Mammary epithelial cell (primary cell): ENCODE measurements at regions of chr1 and their contacts with region 1.

Region 1: GRCh38 chr1:230978491-230979388 is at the starts of genes ARV1 and TTC13:
- DNase-seq: peak; percentile 99
- H3K4me3 ChIP-seq: peak within 1 kb of the TSS; percentile 70 to 84 (median 84)
- H3K27ac ChIP-seq: peak within 1 kb of the TSS; percentile 39
- H3K4me1 ChIP-seq: peaks cover 6% of the 10 kb centered on the region
- H3K27me3 ChIP-seq: no peaks in the 10 kb centered on the region
- CTCF ChIP-seq: peak; percentile 26 to 47
- total RNA-seq, gene ARV1: 14.5 to 22.4 TPM
- total RNA-seq, gene TTC13: 11.9 to 12.5 TPM

Region 2: DNA sequence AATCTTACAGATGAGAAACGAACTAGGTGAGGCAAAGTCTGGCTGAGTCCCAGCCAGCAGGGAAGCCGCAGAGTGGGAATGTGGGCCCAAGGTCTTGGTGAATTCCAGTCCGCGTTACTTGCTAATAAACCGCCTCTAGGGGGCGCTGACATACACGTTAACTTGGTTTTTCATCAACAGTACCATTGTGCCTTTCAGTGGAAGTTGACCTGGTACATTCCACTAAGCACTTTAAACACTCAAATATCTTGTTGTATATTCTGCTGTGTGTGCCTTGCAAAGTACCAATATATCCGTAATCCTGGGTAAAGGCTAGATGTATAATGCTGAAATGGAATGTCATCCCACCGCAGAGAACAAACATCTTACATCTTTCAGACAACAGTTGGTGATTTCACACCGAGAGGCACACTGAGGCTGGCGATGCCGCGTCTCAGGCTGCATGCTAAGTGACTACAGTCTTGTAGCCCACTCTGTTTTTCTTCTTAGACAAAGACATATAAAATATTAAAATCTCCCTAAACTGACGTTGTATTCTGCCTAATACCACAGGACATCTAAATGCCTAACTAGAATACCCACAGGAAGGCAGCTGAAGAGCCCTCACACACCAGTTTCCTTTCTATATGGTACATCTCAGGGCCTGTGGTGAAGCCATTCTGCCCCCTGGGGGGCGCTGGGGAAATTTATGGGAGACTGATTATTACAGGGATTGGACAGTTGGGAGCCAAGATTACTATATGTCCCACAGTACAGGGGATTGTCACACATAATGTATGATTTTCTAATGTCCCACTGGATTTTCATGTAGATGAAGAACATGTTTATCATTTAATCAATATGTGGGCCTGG is 61.2 kb before region 1 on chr1:
- CTCF ChIA-PET with region 1: no interaction called
- dilution Hi-C with region 1: no loop called
- in situ Hi-C with region 1: no loop called
- intact Hi-C with region 1: loop called (anchors 2 kb)
- DNase-seq: peak; percentile 44
- H3K4me3 ChIP-seq: no peak overlapping the region
- H3K27ac ChIP-seq: no peak overlapping the region
- H3K4me1 ChIP-seq: no peaks in the 10 kb centered on the region
- H3K27me3 ChIP-seq: no peaks in the 10 kb centered on the region
- CTCF ChIP-seq: peak; percentile 73 to 81

Region 3: DNA sequence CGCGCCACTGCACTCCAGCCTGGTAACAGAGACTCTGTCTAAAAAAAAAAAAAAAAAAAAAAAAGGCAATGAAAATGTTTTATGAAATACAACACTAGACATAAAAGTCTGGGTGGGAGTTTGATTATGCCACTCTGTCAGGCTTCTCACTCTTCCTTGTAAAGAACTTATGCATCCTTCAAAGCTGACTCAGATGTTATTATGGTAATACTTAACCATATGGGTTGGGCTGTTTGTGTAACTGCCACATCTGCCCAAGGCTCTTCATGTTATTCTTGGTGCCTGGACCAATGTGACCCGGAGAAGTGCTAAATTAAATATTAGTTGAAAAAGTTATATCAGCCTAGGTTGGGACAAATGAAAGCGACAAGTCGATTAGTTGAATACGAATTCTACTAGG is 37.5 kb after region 1 on chr1:
- CTCF ChIA-PET with region 1: no interaction called
- dilution Hi-C with region 1: no loop called
- in situ Hi-C with region 1: no loop called
- intact Hi-C with region 1: loop called (anchors 2 kb)
- DNase-seq: peak; percentile 43
- H3K4me3 ChIP-seq: no peak overlapping the region
- H3K27ac ChIP-seq: peak overlapping the region; percentile 95
- H3K4me1 ChIP-seq: peaks cover 31% of the 10 kb centered on the region
- H3K27me3 ChIP-seq: no peaks in the 10 kb centered on the region
- CTCF ChIP-seq: no peak

Region 4: DNA sequence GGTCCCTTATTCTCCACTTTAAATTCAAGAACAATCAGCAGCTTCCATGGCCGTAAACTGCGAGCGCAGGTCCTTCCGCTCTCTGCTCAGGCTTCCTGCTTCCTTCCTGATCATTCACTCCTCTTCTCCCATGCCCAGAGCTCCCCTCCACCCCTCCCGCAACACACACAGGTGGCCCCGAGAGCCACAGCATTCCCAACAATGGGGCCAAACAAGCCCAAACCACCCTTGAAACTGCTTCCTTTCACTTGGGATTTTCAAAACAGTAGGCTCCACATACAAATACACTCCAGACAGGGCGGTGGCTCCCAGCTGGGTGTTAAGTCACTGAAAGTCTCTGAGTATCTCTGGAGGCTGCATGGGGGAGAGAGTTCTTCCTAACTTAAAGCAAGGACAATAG is 49.9 kb after region 1 on chr1:
- CTCF ChIA-PET with region 1: no interaction called
- dilution Hi-C with region 1: no loop called
- in situ Hi-C with region 1: no loop called
- intact Hi-C with region 1: no loop called
- DNase-seq: no peak
- H3K4me3 ChIP-seq: no peak overlapping the region
- H3K27ac ChIP-seq: no peak overlapping the region
- H3K4me1 ChIP-seq: no peaks in the 10 kb centered on the region
- H3K27me3 ChIP-seq: no peaks in the 10 kb centered on the region
- CTCF ChIP-seq: no peak

Region 5: GRCh38 chr1:231040019-231040799 is 61.5 kb after region 1 on chr1 and contains the start of gene FAM89A:
- CTCF ChIA-PET with region 1: no interaction called
- dilution Hi-C with region 1: no loop called
- in situ Hi-C with region 1: no loop called
- intact Hi-C with region 1: loop called (anchors 1 kb)
- DNase-seq: no peak
- H3K4me3 ChIP-seq: peak within 1 kb of the TSS; percentile 72 to 92 (median 86)
- H3K27ac ChIP-seq: no peak within 1 kb of the TSS
- H3K4me1 ChIP-seq: peaks cover 11% of the 10 kb centered on the region
- H3K27me3 ChIP-seq: peaks cover 2% of the 10 kb centered on the region
- CTCF ChIP-seq: no peak
- total RNA-seq, gene FAM89A: 4.7 to 16.7 TPM

Region 6: GRCh38 chr1:231106347-231106746 is 127.6 kb after region 1 on chr1:
- CTCF ChIA-PET with region 1: no interaction called
- dilution Hi-C with region 1: no loop called
- in situ Hi-C with region 1: no loop called
- intact Hi-C with region 1: no loop called
- DNase-seq: no peak
- H3K4me3 ChIP-seq: no peak overlapping the region
- H3K27ac ChIP-seq: no peak overlapping the region
- H3K4me1 ChIP-seq: no peaks in the 10 kb centered on the region
- H3K27me3 ChIP-seq: no peaks in the 10 kb centered on the region
- CTCF ChIP-seq: no peak